Gastrocnemius medialis (tissue), 4 donors: ENCODE measurements at regions of chr17 and their contacts with region 1.

Region 1: DNA sequence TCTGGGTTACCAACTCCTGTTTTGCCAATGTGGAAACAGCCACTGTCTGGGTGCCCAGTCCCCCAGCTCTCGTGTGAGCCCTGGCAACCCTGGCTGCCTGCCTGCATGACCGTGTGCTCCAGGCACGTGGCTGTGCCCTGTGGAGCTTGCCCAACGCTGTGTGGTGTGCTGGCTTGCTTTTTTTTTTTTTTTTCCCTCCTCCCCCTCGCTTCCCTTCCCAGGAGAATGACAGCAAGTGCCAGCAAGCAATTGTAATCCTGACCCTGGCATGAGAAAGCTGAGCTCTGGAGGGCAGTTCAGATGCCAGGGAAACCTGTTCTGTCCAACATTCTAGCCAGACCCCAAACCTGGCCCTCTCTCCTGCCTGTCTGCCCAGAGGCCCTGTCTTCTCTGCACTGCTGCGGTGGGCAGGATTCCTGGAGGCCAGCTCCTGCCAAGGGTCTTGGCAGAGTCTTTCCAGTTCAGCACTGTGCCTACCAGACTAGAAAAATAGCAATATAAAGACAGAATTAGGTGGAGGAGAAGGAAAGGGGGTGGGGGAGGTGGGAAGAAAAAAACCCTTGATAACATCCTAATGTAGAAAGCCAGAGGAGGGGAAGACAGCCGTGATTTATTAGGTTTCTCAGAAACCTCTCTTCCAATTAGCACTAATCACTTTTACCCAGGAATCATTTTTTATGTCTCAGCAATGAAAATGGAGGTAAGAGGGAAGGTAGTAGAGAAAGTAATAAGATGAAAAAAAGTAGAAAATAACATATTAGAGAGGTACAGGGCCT is 9.0 kb downstream of the HLF start:
- DNase-seq: peak; percentile 74 to 87
- ATAC-seq: peak; percentile 76 to 91
- H3K4me3 ChIP-seq: peak overlapping the region in 3 of 4 donors; percentile 0 to 30 (median 9)
- H3K27ac ChIP-seq: peak overlapping the region; percentile 79 to 83 (median 82)
- H3K4me1 ChIP-seq: peaks cover 36 to 48% of the 10 kb centered on the region in 2 donors
- H3K27me3 ChIP-seq: no peaks in the 10 kb centered on the region
- CTCF ChIP-seq: no peak
- POLR2A ChIP-seq: no peak

Region 2: GRCh38 chr17:55285340-55286301 is 11.9 kb after region 1 on chr17:
- in situ Hi-C with region 1: no loop called
- intact Hi-C with region 1: loop called (anchors 1 kb)
- DNase-seq: peak; percentile 93 to 94
- ATAC-seq: peak; percentile 89 to 93
- H3K4me3 ChIP-seq: peak overlapping the region; percentile 13 to 39 (median 18)
- H3K27ac ChIP-seq: peak overlapping the region; percentile 82 to 96 (median 88)
- H3K4me1 ChIP-seq: peaks cover 36 to 53% of the 10 kb centered on the region in 2 donors
- H3K27me3 ChIP-seq: no peaks in the 10 kb centered on the region
- CTCF ChIP-seq: no peak
- POLR2A ChIP-seq: no peak

Region 3: GRCh38 chr17:55356434-55357328 is 82.9 kb after region 1 on chr17:
- in situ Hi-C with region 1: no loop called
- intact Hi-C with region 1: no loop called
- DNase-seq: peak; percentile 12 to 27
- ATAC-seq: peak; percentile 46 to 69
- H3K4me3 ChIP-seq: no peak overlapping the region
- H3K27ac ChIP-seq: no peak overlapping the region
- H3K4me1 ChIP-seq: no peaks in the 10 kb centered on the region
- H3K27me3 ChIP-seq: no peaks in the 10 kb centered on the region
- CTCF ChIP-seq: peak; percentile 47 to 75 (median 57)
- POLR2A ChIP-seq: no peak

Region 4: DNA sequence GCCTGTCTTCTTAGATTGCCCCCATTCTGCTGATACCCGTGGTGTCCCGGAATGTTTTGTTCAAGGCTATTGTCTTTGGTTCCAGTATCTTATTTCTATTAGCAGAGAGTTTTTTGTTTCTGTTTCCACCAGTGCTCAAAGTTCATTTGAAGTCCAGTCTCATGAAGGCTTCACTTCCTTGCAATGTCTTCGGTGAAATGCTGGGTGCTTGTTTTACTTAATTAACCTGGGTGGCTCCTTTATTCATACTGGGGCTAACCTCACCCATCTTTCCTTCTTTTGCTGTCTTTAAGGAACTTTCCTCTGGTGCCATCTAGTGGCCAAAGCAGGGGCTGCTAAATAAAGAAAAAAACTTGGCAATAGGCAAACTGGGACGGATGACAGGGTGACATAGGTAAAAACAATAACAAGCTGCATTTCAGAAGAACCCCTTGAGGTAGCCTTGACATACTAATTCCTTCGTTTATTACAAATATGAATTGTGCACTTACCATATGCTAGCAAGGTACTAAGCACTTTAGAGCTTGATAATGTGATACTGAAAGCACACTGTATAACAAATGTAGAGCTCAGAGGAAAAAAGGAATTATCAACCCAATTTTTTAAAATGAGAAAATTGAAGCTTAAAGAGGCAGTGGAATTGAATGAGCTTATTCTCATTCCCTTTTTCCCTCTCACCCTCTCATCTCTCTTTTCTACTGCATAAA is 240.3 kb after region 1 on chr17:
- in situ Hi-C with region 1: no loop called
- intact Hi-C with region 1: no loop called
- DNase-seq: peak; percentile 33 to 53
- ATAC-seq: peak; percentile 85 to 91
- H3K4me3 ChIP-seq: no peak overlapping the region
- H3K27ac ChIP-seq: no peak overlapping the region
- H3K4me1 ChIP-seq: no peaks in the 10 kb centered on the region
- H3K27me3 ChIP-seq: no peaks in the 10 kb centered on the region
- CTCF ChIP-seq: peak; percentile 76 to 93 (median 85)
- POLR2A ChIP-seq: no peak

Region 5: GRCh38 chr17:55601874-55602364 is 328.2 kb after region 1 on chr17:
- in situ Hi-C with region 1: no loop called
- intact Hi-C with region 1: no loop called
- DNase-seq: no peak
- ATAC-seq: no peak
- H3K4me3 ChIP-seq: no peak overlapping the region
- H3K27ac ChIP-seq: no peak overlapping the region
- H3K4me1 ChIP-seq: peaks cover 0 to 6% of the 10 kb centered on the region in 2 donors
- H3K27me3 ChIP-seq: no peaks in the 10 kb centered on the region
- CTCF ChIP-seq: peak in 4 of 5 experiments; percentile 27 to 54 (median 36)
- POLR2A ChIP-seq: no peak

Region 6: DNA sequence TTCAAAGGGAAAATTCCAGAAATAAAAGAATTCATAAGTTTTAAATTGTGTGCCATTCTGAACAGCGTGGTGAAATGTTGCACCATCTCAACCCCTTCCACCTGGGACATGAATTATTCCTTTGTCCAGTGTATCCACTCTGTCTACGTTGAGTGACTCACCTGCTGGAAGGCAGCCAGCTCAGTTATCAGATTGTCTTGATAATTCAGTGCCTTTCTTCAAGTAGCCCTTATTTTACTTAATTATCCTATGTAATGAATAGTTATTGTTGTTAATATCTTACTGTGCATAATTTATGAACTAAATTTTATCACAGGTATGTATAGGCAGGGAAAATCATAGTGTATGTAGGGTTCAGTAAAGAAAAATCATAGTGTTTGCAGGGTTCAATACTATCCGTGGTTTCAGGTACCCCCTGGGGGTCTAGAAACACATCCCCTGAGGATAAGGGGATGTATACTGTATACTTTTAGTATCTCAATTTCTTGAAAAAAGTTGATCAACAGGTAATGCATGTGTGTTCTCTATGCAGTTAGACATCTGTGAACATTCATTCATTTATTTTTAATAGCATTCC is 469.4 kb after region 1 on chr17:
- in situ Hi-C with region 1: no loop called
- intact Hi-C with region 1: loop called (anchors 5 kb)
- DNase-seq: no peak
- ATAC-seq: no peak
- H3K4me3 ChIP-seq: no peak overlapping the region
- H3K27ac ChIP-seq: no peak overlapping the region
- H3K4me1 ChIP-seq: peaks cover 9 to 17% of the 10 kb centered on the region in 2 donors
- H3K27me3 ChIP-seq: no peaks in the 10 kb centered on the region
- CTCF ChIP-seq: no peak
- POLR2A ChIP-seq: no peak